Mammary epithelial cell (primary cell): ENCODE measurements at regions of chr3 and their contacts with region 1.

Region 1: GRCh38 chr3:9582332-9582731 is 28.7 kb upstream of the LHFPL4 start:
- DNase-seq: no peak
- H3K4me3 ChIP-seq: no peak overlapping the region
- H3K27ac ChIP-seq: no peak overlapping the region
- H3K4me1 ChIP-seq: no peaks in the 10 kb centered on the region
- H3K27me3 ChIP-seq: no peaks in the 10 kb centered on the region
- CTCF ChIP-seq: no peak

Region 2: DNA sequence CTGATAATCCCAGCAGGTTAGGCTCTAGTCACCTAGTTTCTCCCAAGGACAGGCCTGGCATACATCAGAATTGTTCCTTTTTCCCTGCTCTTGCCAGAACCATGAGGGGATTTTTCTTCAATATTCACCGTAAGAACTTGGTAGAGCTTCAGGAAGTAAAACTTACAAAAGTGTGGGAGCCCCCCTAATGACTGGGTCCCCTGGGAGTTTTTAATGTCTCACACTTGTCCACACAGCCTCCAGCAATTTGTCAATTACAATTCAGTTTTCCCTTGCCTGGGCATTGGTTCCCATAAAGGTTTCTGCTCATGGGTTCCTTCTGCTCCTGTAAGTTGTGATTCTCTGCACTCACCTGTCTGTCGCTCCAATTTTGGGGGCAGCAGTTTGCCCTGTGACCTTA is 57.3 kb before region 1 on chr3:
- CTCF ChIA-PET with region 1: no interaction called
- dilution Hi-C with region 1: loop called (anchors 10 kb)
- in situ Hi-C with region 1: no loop called
- intact Hi-C with region 1: no loop called
- DNase-seq: no peak
- H3K4me3 ChIP-seq: no peak overlapping the region
- H3K27ac ChIP-seq: no peak overlapping the region
- H3K4me1 ChIP-seq: no peaks in the 10 kb centered on the region
- H3K27me3 ChIP-seq: peaks cover 2% of the 10 kb centered on the region
- CTCF ChIP-seq: no peak

Region 3: GRCh38 chr3:9638155-9638554 is 55.8 kb after region 1 on chr3:
- CTCF ChIA-PET with region 1: interaction called, 5 read pairs
- dilution Hi-C with region 1: loop called (anchors 10 kb)
- in situ Hi-C with region 1: no loop called
- intact Hi-C with region 1: no loop called
- DNase-seq: no peak
- H3K4me3 ChIP-seq: no peak overlapping the region
- H3K27ac ChIP-seq: no peak overlapping the region
- H3K4me1 ChIP-seq: no peaks in the 10 kb centered on the region
- H3K27me3 ChIP-seq: no peaks in the 10 kb centered on the region
- CTCF ChIP-seq: no peak

Region 4: GRCh38 chr3:9676785-9677184 is 94.5 kb after region 1 on chr3:
- CTCF ChIA-PET with region 1: no interaction called
- dilution Hi-C with region 1: loop called (anchors 10 kb)
- in situ Hi-C with region 1: no loop called
- intact Hi-C with region 1: no loop called
- DNase-seq: no peak
- H3K4me3 ChIP-seq: no peak overlapping the region
- H3K27ac ChIP-seq: no peak overlapping the region
- H3K4me1 ChIP-seq: no peaks in the 10 kb centered on the region
- H3K27me3 ChIP-seq: no peaks in the 10 kb centered on the region
- CTCF ChIP-seq: no peak